ENCODE measurements at regions of chr6 and their contacts with region 1.

Region 1: DNA sequence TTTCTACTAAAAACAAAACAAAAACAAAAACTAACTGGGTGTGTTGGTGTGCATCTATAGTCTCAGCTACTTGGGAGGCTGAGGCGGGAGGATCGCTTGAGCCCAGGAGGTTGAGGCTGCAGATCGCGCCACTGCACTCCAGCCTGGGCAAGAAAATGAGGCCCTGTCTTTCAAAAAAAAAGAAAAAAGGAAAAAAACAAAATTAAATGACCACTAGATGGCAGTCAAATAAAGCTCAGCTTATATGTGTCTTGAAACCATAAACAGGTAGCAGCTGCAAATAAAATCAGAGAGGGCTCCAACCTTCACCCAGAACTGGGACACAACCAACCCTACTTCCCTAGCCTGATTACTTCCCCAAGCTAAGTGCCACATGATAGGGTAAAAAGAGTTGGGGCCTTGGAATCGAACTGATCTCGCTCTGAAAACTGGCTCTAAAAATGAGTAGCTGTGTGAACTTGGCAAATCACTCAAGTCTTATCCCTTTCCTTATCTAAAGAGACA is 67.1 kb upstream of the ADGRF4 start:
- DNase-seq: no peak
- ATAC-seq: peak; percentile 55 to 87 (median 70)
- H3K4me3 ChIP-seq: no peak overlapping the region
- H3K27ac ChIP-seq: peak overlapping the region in 3 of 10 donors; percentile 31 to 65 (median 47)
- H3K4me1 ChIP-seq: peaks cover 0 to 39% (median 17%) of the 10 kb centered on the region in 9 donors
- H3K27me3 ChIP-seq: no peaks in the 10 kb centered on the region
- CTCF ChIP-seq: peak; percentile 58 to 85 (median 75)

Region 2: DNA sequence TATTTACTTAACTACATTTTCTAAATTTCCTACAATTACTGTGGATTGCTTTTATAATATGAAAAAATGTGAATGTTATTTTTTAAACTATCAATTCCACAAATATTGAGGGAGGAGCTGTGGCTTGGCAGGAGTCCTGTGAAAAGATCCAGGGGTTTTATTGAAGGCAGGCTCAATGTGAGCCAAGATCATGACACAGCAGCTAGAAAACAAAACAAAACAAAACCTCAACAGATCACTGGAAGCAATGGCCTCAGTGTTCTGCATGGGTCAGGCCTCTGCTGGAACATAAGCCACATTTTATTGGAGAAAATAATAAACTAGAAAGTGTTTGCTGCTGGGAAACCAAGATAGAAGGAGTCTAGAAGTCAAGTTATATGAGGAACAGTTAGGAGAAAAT is 1120.7 kb before region 1 on chr6:
- intact Hi-C with region 1: no loop called
- DNase-seq: peak in 1 of 2 donors; percentile 54
- ATAC-seq: peak in 6 of 8 donors; percentile 23 to 77 (median 63)
- H3K4me3 ChIP-seq: no peak overlapping the region
- H3K27ac ChIP-seq: peak overlapping the region; percentile 48 to 85 (median 80)
- H3K4me1 ChIP-seq: peaks cover 3 to 82% (median 61%) of the 10 kb centered on the region in 9 donors
- H3K27me3 ChIP-seq: no peaks in the 10 kb centered on the region
- CTCF ChIP-seq: no peak

Region 3: DNA sequence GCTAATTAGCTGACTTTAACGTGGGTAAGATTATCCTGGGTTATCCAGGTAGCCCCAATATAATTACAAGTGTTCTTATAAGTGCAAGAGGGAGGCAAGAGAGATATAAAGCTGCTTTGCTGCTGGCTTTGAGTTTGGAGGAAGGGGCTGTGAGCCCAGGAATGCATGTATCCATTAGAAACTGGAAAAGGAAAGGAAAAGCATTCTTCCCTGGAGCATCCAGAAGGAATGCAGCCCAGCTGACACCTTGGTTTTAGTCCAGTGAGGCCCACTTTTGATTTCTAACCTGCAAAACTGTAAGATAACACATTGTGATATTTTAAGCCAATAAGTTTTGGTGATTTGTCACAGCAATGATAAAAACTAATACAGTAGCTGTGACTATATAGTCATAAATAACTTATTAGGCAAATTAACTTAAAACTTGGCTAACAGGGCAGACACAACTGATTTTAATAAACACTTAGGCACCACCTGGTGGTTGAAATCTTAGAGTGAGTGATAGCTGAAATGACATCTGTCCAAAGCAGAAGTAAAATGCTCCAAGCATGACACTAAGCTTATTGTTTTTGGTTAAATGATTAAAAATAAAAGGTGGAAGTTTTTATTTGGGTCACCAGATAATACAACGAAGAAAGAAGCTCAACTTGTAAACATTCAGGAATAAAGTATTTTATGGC is 102.7 kb after region 1 on chr6:
- intact Hi-C with region 1: loop called (anchors 1 to 5 kb)
- DNase-seq: peak in 1 of 2 donors; percentile 11
- ATAC-seq: no peak
- H3K4me3 ChIP-seq: no peak overlapping the region
- H3K27ac ChIP-seq: no peak overlapping the region
- H3K4me1 ChIP-seq: peaks cover 0 to 8% (median 4%) of the 10 kb centered on the region in 9 donors
- H3K27me3 ChIP-seq: no peaks in the 10 kb centered on the region
- CTCF ChIP-seq: peak in 8 of 9 donors; percentile 36 to 64 (median 46)

Region 4: DNA sequence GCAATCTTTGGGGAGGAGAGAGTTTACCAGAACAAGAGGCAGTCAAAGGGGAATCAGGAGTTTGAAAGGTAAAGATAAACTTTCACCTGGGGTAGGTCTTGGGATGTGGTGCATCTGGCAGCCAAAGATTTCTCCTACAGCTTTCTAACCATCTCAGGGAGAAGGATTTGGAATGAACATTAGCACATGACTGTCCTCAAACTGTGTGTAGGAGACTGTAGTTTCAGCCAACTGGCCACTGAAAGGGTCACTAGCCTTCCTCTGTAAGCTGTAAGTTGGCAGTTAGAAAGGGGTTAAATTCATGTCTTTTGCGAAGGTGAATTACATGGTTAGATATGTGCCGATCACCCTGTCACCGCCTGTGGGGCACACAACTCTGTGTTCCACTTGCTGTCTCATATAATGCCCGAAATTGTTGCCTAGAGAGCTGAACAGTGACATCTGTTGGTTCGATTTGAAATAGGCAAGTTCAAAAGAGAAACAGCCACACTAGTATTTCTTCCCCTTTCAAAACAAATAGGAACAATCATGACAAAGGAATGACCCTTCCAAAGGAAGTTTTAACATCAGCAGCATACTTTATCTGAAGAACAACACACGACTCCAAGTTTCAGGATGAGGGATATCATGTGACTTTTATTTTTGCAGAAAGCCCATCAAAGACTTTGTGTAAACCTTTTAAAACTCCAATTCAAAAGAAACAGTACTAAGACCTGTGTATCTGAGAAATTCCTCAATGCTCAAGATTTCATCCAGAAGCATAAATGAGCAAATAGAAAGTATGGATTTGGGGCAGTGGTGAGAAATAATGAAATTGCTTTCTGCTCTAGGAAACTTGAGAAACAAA is 149.4 kb after region 1 on chr6:
- intact Hi-C with region 1: loop called (anchors 1 to 5 kb)
- DNase-seq: peak in 1 of 2 donors; percentile 23
- ATAC-seq: peak in 7 of 8 donors; percentile 81 to 86 (median 84)
- H3K4me3 ChIP-seq: peak overlapping the region in 1 of 10 donors; percentile 10
- H3K27ac ChIP-seq: peak overlapping the region in 1 of 10 donors; percentile 25
- H3K4me1 ChIP-seq: peaks cover 0 to 10% (median 4%) of the 10 kb centered on the region in 9 donors
- H3K27me3 ChIP-seq: peaks cover 0 to 6% (median 0%) of the 10 kb centered on the region in 7 donors
- CTCF ChIP-seq: peak; percentile 23 to 79 (median 66)

Measured in heart right ventricle (tissue), 16 donors.